Naive thymus-derived CD4-positive, alpha-beta T cell (primary cell): ENCODE measurements at regions of chr17 and their contacts with region 1.

Region 1: DNA sequence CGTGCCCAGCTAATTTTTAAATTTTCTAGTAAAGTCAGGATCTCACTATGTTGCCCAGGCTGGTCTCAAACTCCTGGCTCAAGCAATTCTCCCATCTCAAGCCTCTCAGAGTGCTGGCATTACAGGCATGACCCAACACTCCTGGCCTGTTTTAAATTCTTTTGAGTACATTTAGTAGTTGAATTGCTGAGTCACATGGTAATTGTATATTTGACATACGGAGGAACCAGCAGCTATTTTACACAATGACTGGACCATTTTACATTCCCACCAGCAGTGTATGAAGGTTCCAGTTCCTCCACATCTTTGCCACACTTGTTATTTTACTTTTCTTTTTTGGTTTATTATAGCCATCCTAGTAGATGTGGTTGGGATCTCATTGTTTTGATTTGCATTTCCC is 43.6 kb downstream of the RHOT1 start:
- DNase-seq: no peak
- ATAC-seq: no peak
- H3K4me3 ChIP-seq: no peak overlapping the region
- H3K4me3 Mint-ChIP-seq: no peak overlapping the region
- H3K27ac ChIP-seq: no peak overlapping the region
- H3K27ac Mint-ChIP-seq: no peak overlapping the region
- H3K4me1 ChIP-seq: no peaks in the 10 kb centered on the region
- H3K4me1 Mint-ChIP-seq: peaks cover 0 to 4% (median 0%) of the 10 kb centered on the region in 7 donors
- H3K27me3 ChIP-seq: no peaks in the 10 kb centered on the region
- H3K27me3 Mint-ChIP-seq: no peaks in the 10 kb centered on the region

Region 2: GRCh38 chr17:32197987-32198386 is 12.1 kb after region 1 on chr17:
- CTCF ChIA-PET with region 1: interaction called, 4 read pairs
- POLR2A ChIA-PET with region 1: no interaction called
- intact Hi-C with region 1: loop called in 1 of 2 experiments (anchors 2 kb)
- DNase-seq: no peak
- ATAC-seq: no peak
- H3K4me3 ChIP-seq: no peak overlapping the region
- H3K4me3 Mint-ChIP-seq: no peak overlapping the region
- H3K27ac ChIP-seq: no peak overlapping the region
- H3K27ac Mint-ChIP-seq: no peak overlapping the region
- H3K4me1 ChIP-seq: no peaks in the 10 kb centered on the region
- H3K4me1 Mint-ChIP-seq: peaks cover 0 to 5% (median 0%) of the 10 kb centered on the region in 7 donors
- H3K27me3 ChIP-seq: no peaks in the 10 kb centered on the region
- H3K27me3 Mint-ChIP-seq: no peaks in the 10 kb centered on the region

Region 3: GRCh38 chr17:32341857-32342602 is 156.2 kb after region 1 on chr17 and contains the start of gene C17orf75:
- CTCF ChIA-PET with region 1: no interaction called
- POLR2A ChIA-PET with region 1: no interaction called
- intact Hi-C with region 1: no loop called
- DNase-seq: peak; percentile 63 to 81 (median 76)
- ATAC-seq: peak; percentile 92
- H3K4me3 ChIP-seq: peak within 1 kb of the TSS; percentile 64
- H3K4me3 Mint-ChIP-seq: peak within 1 kb of the TSS; percentile 83 to 94 (median 92)
- H3K27ac ChIP-seq: peak within 1 kb of the TSS; percentile 80
- H3K27ac Mint-ChIP-seq: peak within 1 kb of the TSS; percentile 83 to 96 (median 93)
- H3K4me1 ChIP-seq: peaks cover 5 to 9% of the 10 kb centered on the region in 2 donors
- H3K4me1 Mint-ChIP-seq: peaks cover 19 to 33% (median 25%) of the 10 kb centered on the region in 7 donors
- H3K27me3 ChIP-seq: no peaks in the 10 kb centered on the region
- H3K27me3 Mint-ChIP-seq: no peaks in the 10 kb centered on the region
- total RNA-seq, gene C17orf75: 14.2 to 22.0 (median 17.9) TPM